ENCODE measurements at regions of chr19 and their contacts with region 1.

Region 1: DNA sequence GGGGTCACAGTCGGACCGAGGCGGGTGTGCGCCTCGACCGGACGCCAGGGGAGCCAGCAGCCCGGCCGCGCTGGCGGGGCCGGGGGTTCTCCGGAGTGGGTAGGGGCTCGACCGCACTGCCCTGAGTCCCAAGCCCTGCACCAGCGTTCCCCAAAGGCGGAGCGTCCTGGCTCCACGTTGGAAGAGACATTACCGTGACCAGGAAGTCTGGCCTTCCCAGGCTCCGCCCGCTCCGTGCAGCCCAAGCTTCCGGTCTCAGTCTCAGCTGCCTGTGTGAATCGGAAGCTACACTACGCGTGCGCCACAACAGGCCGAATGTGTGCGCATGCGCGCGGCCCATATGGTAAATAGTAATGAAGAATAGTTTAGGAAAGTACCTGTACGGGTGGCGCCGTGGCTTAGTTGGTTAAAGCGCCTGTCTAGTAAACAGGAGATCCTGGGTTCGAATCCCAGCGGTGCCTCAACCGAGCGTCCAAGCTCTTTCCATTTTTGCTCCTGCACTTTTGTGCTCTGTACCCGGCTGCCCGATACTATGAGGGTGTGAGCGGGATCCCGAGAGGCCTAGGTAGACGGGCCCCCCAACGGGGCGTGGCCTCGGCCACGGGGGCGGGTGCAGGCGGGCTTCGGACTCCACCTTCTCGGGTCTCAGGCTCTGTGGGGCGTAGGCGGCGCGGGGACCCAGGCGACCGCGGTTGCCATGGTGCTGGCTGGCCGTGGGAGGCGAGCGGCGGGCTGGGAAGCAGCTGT is 17.3 kb upstream of the LRP3 start:
- DNase-seq: peak; percentile 94 to 97
- ATAC-seq: peak; percentile 94 to 98 (median 96)
- H3K4me3 ChIP-seq: peak overlapping the region; percentile 46 to 90 (median 79)
- H3K27ac ChIP-seq: peak overlapping the region; percentile 79 to 97 (median 94)
- H3K4me1 ChIP-seq: peaks cover 7 to 46% (median 26%) of the 10 kb centered on the region in 9 donors
- H3K27me3 ChIP-seq: no peaks in the 10 kb centered on the region
- CTCF ChIP-seq: peak in 5 of 9 donors; percentile 17 to 41 (median 33)

Region 2: DNA sequence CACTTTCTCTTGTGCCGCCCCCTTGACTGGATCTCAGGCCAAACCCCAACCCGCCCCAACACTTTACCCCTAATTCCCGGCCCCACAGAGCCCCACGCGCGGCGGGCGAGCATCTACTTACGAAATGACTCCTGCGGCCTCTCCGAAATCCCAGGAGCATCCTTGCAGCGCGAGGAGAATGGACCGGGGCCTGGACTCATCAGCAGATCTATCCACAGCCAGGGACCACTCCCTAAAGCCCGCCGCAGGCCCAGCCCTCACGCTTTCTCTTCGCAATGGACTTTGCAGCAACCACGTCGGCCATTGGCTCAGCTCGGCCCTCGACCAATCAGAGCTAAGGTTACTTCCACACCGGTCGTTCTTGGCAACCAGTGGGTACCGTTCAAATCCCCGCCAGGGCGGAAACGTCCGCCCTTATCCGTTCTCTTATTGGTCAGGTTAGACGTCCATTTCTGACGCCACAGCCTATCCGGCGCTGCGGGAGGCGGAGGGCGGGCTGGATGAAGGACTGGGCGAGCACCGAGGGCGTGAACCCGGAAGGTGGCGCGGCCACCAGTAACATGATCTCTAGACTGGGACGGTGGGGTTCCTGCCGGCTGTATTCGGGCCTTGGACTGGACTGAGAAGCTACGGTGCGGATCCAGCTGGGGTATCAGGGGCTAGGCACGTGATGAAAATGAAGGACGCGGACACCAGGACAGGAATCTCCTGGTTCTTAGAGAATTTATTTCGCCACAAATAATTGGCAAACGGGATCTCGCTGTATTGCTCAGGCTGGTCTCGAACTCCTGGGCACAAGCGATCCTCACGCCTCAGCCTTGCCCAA is 204.9 kb before region 1 on chr19 and contains the starts of genes CEP89 and FAAP24:
- intact Hi-C with region 1: loop called in 1 of 10 experiments (anchors 5 kb)
- DNase-seq: peak; percentile 96 to 98
- ATAC-seq: peak; percentile 99 to 100 (median 99)
- H3K4me3 ChIP-seq: peak within 1 kb of the TSS; percentile 57 to 85 (median 74)
- H3K27ac ChIP-seq: peak within 1 kb of the TSS in 9 of 10 donors; percentile 42 to 91 (median 61)
- H3K4me1 ChIP-seq: peaks cover 0 to 23% (median 14%) of the 10 kb centered on the region in 9 donors
- H3K27me3 ChIP-seq: no peaks in the 10 kb centered on the region
- CTCF ChIP-seq: no peak
- total RNA-seq, gene CEP89: 7.8 to 13.9 (median 10.4) TPM
- total RNA-seq, gene FAAP24: 0.40 to 1.3 (median 0.58) TPM

Region 3: GRCh38 chr19:33125929-33126388 is 50.9 kb before region 1 on chr19:
- intact Hi-C with region 1: loop called in 2 of 10 experiments (anchors 5 to 10 kb)
- DNase-seq: peak in 1 of 2 donors; percentile 32
- ATAC-seq: peak in 6 of 8 donors; percentile 75 to 87 (median 81)
- H3K4me3 ChIP-seq: no peak overlapping the region
- H3K27ac ChIP-seq: no peak overlapping the region
- H3K4me1 ChIP-seq: peaks cover 0 to 7% (median 0%) of the 10 kb centered on the region in 9 donors
- H3K27me3 ChIP-seq: no peaks in the 10 kb centered on the region
- CTCF ChIP-seq: peak; percentile 75 to 89 (median 83)

Region 4: DNA sequence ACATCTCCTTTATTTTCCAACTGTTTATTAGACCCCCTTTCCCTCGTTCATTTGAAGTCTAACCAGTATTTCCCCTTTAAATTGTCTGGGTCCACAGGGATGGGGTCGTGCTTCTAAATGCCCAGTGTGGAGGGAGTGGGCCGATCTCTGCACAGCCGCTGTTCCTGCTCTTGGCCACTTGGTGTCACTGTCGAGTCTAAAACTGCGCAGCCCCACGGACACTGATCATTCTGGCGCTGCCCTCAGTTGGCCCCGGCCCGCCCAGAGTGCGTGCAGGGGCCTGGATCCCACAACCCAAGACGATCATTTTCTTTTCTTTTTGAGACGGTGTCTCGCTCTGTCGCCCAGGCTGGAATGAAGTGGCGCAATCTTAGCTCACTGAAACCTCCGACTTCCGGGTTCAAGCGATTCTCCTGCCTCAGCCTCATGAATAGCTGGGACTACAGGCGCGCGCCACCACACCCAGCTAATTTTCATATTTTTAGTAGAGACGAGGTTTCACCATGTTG is 32.9 kb before region 1 on chr19:
- intact Hi-C with region 1: loop called in 7 of 10 experiments (anchors 2 to 5 kb)
- DNase-seq: peak; percentile 53 to 57
- ATAC-seq: peak; percentile 91 to 98 (median 96)
- H3K4me3 ChIP-seq: peak overlapping the region in 1 of 10 donors; percentile 9
- H3K27ac ChIP-seq: no peak overlapping the region
- H3K4me1 ChIP-seq: peaks cover 0 to 7% (median 0%) of the 10 kb centered on the region in 9 donors
- H3K27me3 ChIP-seq: peaks cover 0 to 18% (median 4%) of the 10 kb centered on the region in 7 donors
- CTCF ChIP-seq: peak; percentile 77 to 95 (median 94)

Region 5: DNA sequence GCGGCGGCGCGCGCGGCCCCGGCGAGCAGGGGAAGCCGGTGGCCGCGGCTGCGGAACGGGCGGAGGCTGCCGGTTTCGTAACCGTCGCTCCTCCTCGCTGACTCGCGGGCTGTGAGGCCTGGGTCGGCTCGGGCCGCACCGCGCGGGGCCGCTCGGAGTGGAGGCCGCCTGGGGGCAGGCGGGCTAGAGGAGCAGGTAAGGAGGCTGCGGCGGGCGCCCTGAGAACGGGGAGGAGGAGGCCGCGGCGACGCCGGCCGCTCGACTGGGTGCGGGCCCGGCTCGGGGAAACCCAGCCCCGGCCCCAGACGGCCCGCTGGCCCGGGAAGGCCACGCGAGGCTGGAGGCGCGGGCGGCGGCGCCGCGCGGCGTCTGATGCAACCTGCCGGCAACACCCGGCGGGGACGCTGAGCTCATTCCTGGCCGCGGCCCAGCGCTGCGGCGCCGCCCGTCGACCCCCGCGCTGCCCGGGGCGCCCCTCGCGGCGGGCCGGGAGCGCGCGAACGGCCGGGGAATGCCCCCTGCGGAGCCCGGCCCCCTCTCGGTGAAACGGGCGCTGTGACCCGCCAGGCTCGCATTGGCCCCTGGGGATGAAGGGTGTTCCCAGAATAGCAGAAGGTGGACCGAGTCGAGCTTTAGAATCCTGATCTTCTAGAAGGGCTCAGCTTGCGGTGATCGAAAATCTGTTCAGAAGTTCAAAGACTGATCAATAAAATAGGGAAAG is 197.0 kb after region 1 on chr19 and contains the start of gene CEBPG:
- intact Hi-C with region 1: loop called in 1 of 10 experiments (anchors 5 kb)
- DNase-seq: peak; percentile 61 to 64
- ATAC-seq: peak; percentile 26 to 58 (median 43)
- H3K4me3 ChIP-seq: peak within 1 kb of the TSS; percentile 61 to 94 (median 80)
- H3K27ac ChIP-seq: peak within 1 kb of the TSS; percentile 89 to 100 (median 98)
- H3K4me1 ChIP-seq: peaks cover 4 to 52% (median 45%) of the 10 kb centered on the region in 9 donors
- H3K27me3 ChIP-seq: no peaks in the 10 kb centered on the region
- CTCF ChIP-seq: peak in 4 of 9 donors; percentile 29 to 46 (median 37)
- total RNA-seq, gene CEBPG: 10.4 to 19.4 (median 13.4) TPM